Calu3 (cell line): ENCODE measurements at regions of chr16 and their contacts with region 1.

Region 1: GRCh38 chr16:9008601-9009260 is 45.0 kb upstream of the USP7 start:
- DNase-seq: peak; percentile 91
- H3K4me3 Mint-ChIP-seq: peak overlapping the region; percentile 64
- H3K27ac Mint-ChIP-seq: no peak overlapping the region
- H3K4me1 Mint-ChIP-seq: no peaks in the 10 kb centered on the region
- H3K27me3 Mint-ChIP-seq: peaks cover 11% of the 10 kb centered on the region
- CTCF ChIP-seq: peak; percentile 90

Region 2: GRCh38 chr16:7624871-7625766 is 1383.6 kb before region 1 on chr16:
- CTCF ChIA-PET with region 1: no interaction called
- intact Hi-C with region 1: no loop called
- DNase-seq: no peak
- H3K4me3 Mint-ChIP-seq: no peak overlapping the region
- H3K27ac Mint-ChIP-seq: no peak overlapping the region
- H3K4me1 Mint-ChIP-seq: no peaks in the 10 kb centered on the region
- H3K27me3 Mint-ChIP-seq: no peaks in the 10 kb centered on the region
- CTCF ChIP-seq: no peak

Region 3: GRCh38 chr16:8936421-8936820 is 72.3 kb before region 1 on chr16:
- CTCF ChIA-PET with region 1: interaction called, 42 read pairs
- intact Hi-C with region 1: no loop called
- DNase-seq: peak; percentile 86
- H3K4me3 Mint-ChIP-seq: no peak overlapping the region
- H3K27ac Mint-ChIP-seq: no peak overlapping the region
- H3K4me1 Mint-ChIP-seq: peaks cover 50% of the 10 kb centered on the region
- H3K27me3 Mint-ChIP-seq: no peaks in the 10 kb centered on the region
- CTCF ChIP-seq: peak; percentile 60

Region 4: GRCh38 chr16:9033125-9033830 is 24.5 kb after region 1 on chr16:
- CTCF ChIA-PET with region 1: interaction called, 12 read pairs
- intact Hi-C with region 1: no loop called
- DNase-seq: peak; percentile 54
- H3K4me3 Mint-ChIP-seq: no peak overlapping the region
- H3K27ac Mint-ChIP-seq: no peak overlapping the region
- H3K4me1 Mint-ChIP-seq: no peaks in the 10 kb centered on the region
- H3K27me3 Mint-ChIP-seq: no peaks in the 10 kb centered on the region
- CTCF ChIP-seq: peak; percentile 52

Region 5: GRCh38 chr16:9090960-9091866 is 82.5 kb after region 1 on chr16 and contains the start of gene HAPSTR1:
- CTCF ChIA-PET with region 1: interaction called, 21 read pairs
- intact Hi-C with region 1: no loop called
- DNase-seq: peak; percentile 99
- H3K4me3 Mint-ChIP-seq: peak within 1 kb of the TSS; percentile 80
- H3K27ac Mint-ChIP-seq: peak within 1 kb of the TSS; percentile 95
- H3K4me1 Mint-ChIP-seq: peaks cover 31% of the 10 kb centered on the region
- H3K27me3 Mint-ChIP-seq: no peaks in the 10 kb centered on the region
- CTCF ChIP-seq: no peak
- total RNA-seq, gene HAPSTR1: 57.1 and 59.6 TPM in 2 replicates